ENCODE measurements at regions of chr5 and their contacts with region 1.

Region 1: DNA sequence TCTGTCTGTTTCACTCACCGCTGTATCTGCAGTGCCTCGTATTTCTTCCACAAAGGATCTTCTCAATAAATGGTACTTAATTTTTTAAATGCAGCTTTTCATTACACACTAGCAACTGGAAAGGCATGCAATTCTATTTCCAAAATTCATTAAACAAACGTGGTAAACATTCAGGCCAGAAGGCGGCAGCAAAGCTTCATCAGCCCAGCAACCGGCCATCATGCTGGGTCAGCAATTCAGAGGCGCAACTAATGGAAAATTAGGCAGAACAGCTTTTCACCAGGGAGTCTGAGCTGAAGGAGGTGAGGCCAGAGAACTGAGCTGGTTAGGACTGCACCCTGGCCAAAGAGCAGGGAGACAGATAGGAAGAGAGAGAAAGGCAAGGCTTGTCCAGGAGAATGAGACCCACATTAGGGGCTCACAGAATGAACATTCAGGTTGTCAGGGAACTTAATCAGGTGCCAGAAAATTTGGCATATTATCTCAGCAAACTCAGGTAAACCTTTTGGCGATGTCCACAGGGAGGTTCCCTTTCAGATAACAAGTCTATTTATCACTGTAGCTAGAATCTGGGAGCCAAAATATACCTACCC is 17.7 kb upstream of the RNF180 start:
- DNase-seq: peak; percentile 60 to 81 (median 74)
- H3K4me3 ChIP-seq: no peak overlapping the region
- H3K27ac ChIP-seq: no peak overlapping the region
- H3K4me1 ChIP-seq: no peaks in the 10 kb centered on the region
- H3K27me3 ChIP-seq: no peaks in the 10 kb centered on the region
- CTCF ChIP-seq: peak; percentile 95

Region 2: GRCh38 chr5:64207978-64208377 is 60.0 kb after region 1 on chr5:
- intact Hi-C with region 1: loop called (anchors 10 kb)
- DNase-seq: peak in 2 of 5 donors; percentile 29 to 42
- H3K4me3 ChIP-seq: no peak overlapping the region
- H3K27ac ChIP-seq: no peak overlapping the region
- H3K4me1 ChIP-seq: no peaks in the 10 kb centered on the region
- H3K27me3 ChIP-seq: no peaks in the 10 kb centered on the region
- CTCF ChIP-seq: peak; percentile 28

Region 3: DNA sequence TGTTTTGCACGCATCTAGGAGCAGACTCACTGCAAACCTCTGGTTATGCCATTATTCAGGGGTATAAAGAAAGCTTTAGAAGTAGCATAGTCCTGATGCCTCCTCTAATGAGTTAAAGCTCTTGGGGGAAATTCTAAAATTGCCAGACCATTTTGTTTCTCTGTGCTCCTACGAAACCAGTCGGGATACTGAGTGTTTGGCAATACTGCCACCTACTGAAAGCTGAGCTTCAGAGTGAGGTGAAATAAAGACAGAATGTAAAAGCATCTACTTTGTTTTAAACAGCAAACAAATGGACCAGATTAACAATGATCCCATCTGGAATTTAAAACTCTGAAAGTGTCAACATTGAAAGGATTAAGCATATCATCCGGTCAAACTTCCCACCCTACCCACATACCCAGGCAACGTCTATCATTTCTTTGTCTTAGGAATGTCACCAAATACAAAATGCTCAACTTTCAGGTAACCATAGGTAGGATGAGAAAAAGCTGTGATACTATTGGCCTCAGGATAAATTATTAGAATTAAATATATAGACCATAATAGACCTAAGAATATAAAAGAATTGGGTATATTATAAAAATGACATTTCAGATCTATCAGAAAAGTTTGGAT is 464.5 kb after region 1 on chr5:
- intact Hi-C with region 1: loop called (anchors 10 kb)
- DNase-seq: peak in 3 of 5 donors; percentile 63 to 89 (median 88)
- H3K4me3 ChIP-seq: no peak overlapping the region
- H3K27ac ChIP-seq: no peak overlapping the region
- H3K4me1 ChIP-seq: no peaks in the 10 kb centered on the region
- H3K27me3 ChIP-seq: no peaks in the 10 kb centered on the region
- CTCF ChIP-seq: peak; percentile 89

Region 4: GRCh38 chr5:64637837-64638443 is 490.0 kb after region 1 on chr5:
- intact Hi-C with region 1: no loop called
- DNase-seq: no peak
- H3K4me3 ChIP-seq: no peak overlapping the region
- H3K27ac ChIP-seq: no peak overlapping the region
- H3K4me1 ChIP-seq: peaks cover 0 to 2% (median 0%) of the 10 kb centered on the region in 3 donors
- H3K27me3 ChIP-seq: no peaks in the 10 kb centered on the region
- CTCF ChIP-seq: no peak